ENCODE measurements at regions of chr1 and their contacts with region 1.

Region 1: GRCh38 chr1:21782868-21783678 is at the start of gene USP48:
- DNase-seq: peak; percentile 96
- H3K4me3 ChIP-seq: peak within 1 kb of the TSS; percentile 86 to 98 (median 97)
- H3K27ac ChIP-seq: peak within 1 kb of the TSS; percentile 99
- H3K4me1 ChIP-seq: peaks cover 6% of the 10 kb centered on the region
- H3K27me3 ChIP-seq: no peaks in the 10 kb centered on the region
- CTCF ChIP-seq: no peak
- POLR2A ChIP-seq: peak; percentile 97
- total RNA-seq, gene USP48: 146 and 149 TPM in 2 replicates

Region 2: DNA sequence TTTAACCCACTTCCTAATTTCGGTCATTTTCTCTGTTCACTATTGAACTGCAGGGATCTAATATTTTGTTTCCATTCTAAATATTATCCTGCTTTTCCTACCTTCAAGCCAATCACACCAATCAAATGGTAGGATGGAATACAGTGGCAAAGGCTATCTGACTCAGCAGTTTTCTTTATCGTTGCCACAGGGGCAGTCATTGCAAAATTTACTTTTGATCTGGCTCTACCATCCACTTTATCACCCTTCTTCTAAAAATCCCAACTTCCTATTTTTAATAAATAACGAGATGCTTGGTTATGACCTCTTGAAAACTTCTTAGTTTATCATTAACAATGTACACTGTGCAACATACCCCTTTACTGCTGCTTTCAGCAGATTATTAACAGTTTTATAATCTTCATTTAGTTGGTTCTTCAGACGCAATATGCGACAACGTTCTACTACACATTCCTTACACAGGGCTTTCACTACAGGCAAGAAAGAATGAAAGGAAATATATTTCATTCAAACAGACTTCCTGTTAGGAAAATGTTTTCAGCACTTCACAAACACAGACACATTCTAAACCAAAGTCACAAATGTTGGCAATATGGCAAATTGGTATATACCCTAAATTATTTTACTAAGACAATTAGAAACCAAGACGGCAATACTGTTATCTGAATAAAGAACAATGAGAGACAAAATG is 61.6 kb before region 1 on chr1:
- CTCF ChIA-PET with region 1: interaction called, 11 read pairs
- POLR2A ChIA-PET with region 1: no interaction called
- dilution Hi-C with region 1: no loop called
- intact Hi-C with region 1: loop called (anchors 5 kb)
- DNase-seq: peak; percentile 77
- H3K4me3 ChIP-seq: peak overlapping the region in 1 of 3 experiments; percentile 27
- H3K27ac ChIP-seq: peak overlapping the region; percentile 55
- H3K4me1 ChIP-seq: peaks cover 20% of the 10 kb centered on the region
- H3K27me3 ChIP-seq: no peaks in the 10 kb centered on the region
- CTCF ChIP-seq: no peak
- POLR2A ChIP-seq: no peak

Region 3: GRCh38 chr1:21764615-21765423 is 18.3 kb before region 1 on chr1:
- CTCF ChIA-PET with region 1: interaction called, 21 read pairs
- POLR2A ChIA-PET with region 1: interaction called, 20 read pairs
- dilution Hi-C with region 1: no loop called
- intact Hi-C with region 1: loop called (anchors 1 kb)
- DNase-seq: peak; percentile 98
- H3K4me3 ChIP-seq: no peak overlapping the region
- H3K27ac ChIP-seq: peak overlapping the region; percentile 85
- H3K4me1 ChIP-seq: peaks cover 32% of the 10 kb centered on the region
- H3K27me3 ChIP-seq: no peaks in the 10 kb centered on the region
- CTCF ChIP-seq: no peak
- POLR2A ChIP-seq: no peak

Region 4: GRCh38 chr1:21937372-21938221 is 154.5 kb after region 1 on chr1:
- CTCF ChIA-PET with region 1: no interaction called
- POLR2A ChIA-PET with region 1: no interaction called
- dilution Hi-C with region 1: no loop called
- intact Hi-C with region 1: loop called (anchors 5 kb)
- DNase-seq: peak; percentile 82
- H3K4me3 ChIP-seq: peak overlapping the region in 2 of 3 experiments; percentile 37 to 44
- H3K27ac ChIP-seq: peak overlapping the region; percentile 98
- H3K4me1 ChIP-seq: peaks cover 51% of the 10 kb centered on the region
- H3K27me3 ChIP-seq: no peaks in the 10 kb centered on the region
- CTCF ChIP-seq: no peak
- POLR2A ChIP-seq: no peak

Measured in endothelial cell of umbilical vein (primary cell).